Common myeloid progenitor, CD34-positive (primary cell): ENCODE measurements at regions of chrX and their contacts with region 1.

Region 1: DNA sequence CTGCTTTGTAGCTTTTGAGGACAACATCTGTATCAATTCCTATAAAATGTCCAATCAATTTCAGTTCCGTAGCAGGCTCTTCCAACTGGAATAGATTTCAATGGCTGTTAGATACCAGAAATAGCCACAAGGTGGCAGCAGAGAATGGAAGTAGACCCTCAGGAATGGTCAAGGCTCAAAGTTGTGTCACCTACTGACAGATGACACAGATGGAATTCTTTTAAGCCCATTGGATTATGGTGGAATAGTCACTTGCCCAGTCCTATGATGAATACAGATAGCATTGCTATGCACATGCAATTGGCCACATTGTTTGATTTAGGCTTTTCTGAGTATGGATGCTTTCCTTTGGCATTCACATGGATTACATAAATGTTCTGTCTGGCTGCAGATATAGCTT is 130.4 kb upstream of the RADX start:
- DNase-seq: peak; percentile 18 to 52 (median 33)
- H3K4me3 ChIP-seq: no peak overlapping the region
- H3K27ac ChIP-seq: no peak overlapping the region
- H3K4me1 ChIP-seq: peaks cover 0 to 4% (median 0%) of the 10 kb centered on the region in 4 experiments
- H3K27me3 ChIP-seq: no peaks in the 10 kb centered on the region

Region 2: GRCh38 chrX:106619797-106620196 is 138.5 kb after region 1 on chrX:
- CTCF ChIA-PET with region 1: interaction called, 33 read pairs
- POLR2A ChIA-PET with region 1: no interaction called
- DNase-seq: peak in 2 of 3 donors; percentile 29 to 36
- H3K4me3 ChIP-seq: no peak overlapping the region
- H3K27ac ChIP-seq: no peak overlapping the region
- H3K4me1 ChIP-seq: no peaks in the 10 kb centered on the region
- H3K27me3 ChIP-seq: peaks cover 0 to 7% (median 0%) of the 10 kb centered on the region in 5 experiments